Activated CD4-positive, alpha-beta T cell treated with anti-CD3 and anti-CD28 coated beads for 36 hours (primary cell): ENCODE measurements at regions of chr16 and their contacts with region 1.

Region 1: DNA sequence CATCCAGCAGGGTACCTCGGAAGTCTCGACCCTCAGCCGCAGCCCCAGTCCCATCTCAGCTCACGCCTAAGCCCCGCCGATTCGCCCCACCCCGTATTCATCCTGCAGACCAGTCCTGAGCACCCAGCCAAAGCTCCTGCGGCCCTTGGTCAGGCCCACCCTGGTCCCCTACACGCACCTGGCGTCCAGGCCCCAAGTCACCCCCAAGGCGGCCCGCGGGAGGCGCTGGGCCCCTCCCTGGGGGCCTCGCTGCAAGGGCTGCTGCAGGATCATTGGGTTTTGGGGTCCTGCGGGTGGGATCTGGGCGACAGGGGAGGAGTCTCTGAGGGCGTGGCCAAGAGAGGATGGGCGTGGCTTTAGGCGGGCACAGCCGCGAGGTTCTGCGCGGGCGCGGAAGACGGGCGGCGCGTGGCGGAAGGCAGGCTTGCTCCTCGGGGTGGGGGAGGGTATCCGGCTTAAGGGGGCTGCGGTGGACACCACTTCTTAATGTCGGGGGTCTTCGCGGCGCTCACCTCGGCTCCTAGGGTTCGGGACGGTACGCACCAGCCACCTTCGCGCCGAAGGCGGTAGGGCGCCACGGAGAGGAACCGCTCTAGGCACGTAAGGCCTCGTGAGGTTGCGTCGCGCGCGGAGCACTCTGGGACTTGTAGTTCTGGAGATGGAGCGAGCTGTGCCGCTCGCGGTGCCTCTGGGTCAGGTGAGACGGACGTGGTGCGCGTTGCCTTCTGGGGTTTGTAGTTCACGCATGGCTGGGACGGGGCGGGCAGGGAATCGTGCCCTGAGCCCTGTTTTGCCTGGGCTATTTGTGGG is at the starts of genes HCFC1R1 and THOC6:
- DNase-seq: peak; percentile 99
- ATAC-seq: peak; percentile 74
- H3K4me3 Mint-ChIP-seq: peak within 1 kb of the TSS; percentile 74
- H3K27ac Mint-ChIP-seq: peak within 1 kb of the TSS; percentile 97
- H3K4me1 Mint-ChIP-seq: peaks cover 50% of the 10 kb centered on the region
- H3K27me3 Mint-ChIP-seq: peaks cover 4% of the 10 kb centered on the region
- total RNA-seq, gene HCFC1R1: 30.0 to 30.7 TPM
- total RNA-seq, gene THOC6: 46.9 to 50.2 TPM

Region 2: GRCh38 chr16:2673066-2673999 is 350.5 kb before region 1 on chr16:
- CTCF ChIA-PET with region 1: no interaction called
- POLR2A ChIA-PET with region 1: no interaction called
- intact Hi-C with region 1: loop called in 1 of 2 experiments (anchors 1 kb)
- DNase-seq: peak; percentile 98
- ATAC-seq: peak; percentile 97
- H3K4me3 Mint-ChIP-seq: peak overlapping the region; percentile 73
- H3K27ac Mint-ChIP-seq: peak overlapping the region; percentile 47
- H3K4me1 Mint-ChIP-seq: peaks cover 28% of the 10 kb centered on the region
- H3K27me3 Mint-ChIP-seq: no peaks in the 10 kb centered on the region

Region 3: DNA sequence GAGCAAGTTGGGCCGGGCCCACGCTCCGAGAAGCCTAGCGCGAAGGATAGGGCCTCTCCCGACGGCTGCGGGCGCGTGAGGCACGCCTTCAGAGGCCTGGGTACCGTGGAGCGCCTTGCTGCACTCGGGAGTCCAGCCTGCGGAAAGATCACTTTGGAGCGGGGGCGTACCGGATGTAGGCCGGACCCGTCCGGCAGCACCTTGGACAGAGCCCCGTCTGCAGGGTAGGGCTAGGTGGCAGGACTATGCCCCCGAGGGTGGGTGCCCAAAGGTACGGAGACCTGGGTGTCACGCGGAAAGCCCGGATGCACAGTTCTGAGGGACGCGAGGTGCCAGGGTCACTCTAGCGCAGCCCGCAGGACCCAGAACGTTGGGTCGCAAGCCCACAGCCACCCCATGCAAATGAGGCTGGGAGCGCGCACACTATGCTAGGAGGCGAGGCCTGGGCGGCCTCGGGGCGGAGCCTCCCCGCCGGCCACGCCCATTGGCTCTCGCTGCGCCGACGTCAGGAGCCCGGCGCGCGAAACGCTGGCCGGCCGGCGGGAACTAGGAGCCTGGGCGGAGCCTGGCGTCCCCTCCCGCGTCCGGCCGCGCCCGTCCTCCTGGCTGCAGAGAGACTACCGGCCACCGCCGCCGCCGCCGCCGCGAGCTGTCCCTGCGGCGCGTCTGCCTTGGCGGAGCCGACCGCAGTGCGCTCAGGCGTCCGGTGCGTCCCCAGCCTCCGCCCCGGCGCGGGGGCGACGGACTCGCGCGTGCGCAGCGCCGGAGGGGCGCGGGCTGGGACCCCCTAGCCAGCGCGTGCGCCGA is 54.9 kb before region 1 on chr16 and contains the start of gene PAQR4:
- CTCF ChIA-PET with region 1: interaction called, 5 read pairs
- POLR2A ChIA-PET with region 1: no interaction called
- intact Hi-C with region 1: loop called (anchors 1 to 5 kb)
- DNase-seq: peak; percentile 90
- ATAC-seq: peak; percentile 75
- H3K4me3 Mint-ChIP-seq: peak within 1 kb of the TSS; percentile 72
- H3K27ac Mint-ChIP-seq: peak within 1 kb of the TSS; percentile 25
- H3K4me1 Mint-ChIP-seq: peaks cover 31% of the 10 kb centered on the region
- H3K27me3 Mint-ChIP-seq: peaks cover 21% of the 10 kb centered on the region
- total RNA-seq, gene PAQR4: 28.7 to 31.2 TPM

Region 4: DNA sequence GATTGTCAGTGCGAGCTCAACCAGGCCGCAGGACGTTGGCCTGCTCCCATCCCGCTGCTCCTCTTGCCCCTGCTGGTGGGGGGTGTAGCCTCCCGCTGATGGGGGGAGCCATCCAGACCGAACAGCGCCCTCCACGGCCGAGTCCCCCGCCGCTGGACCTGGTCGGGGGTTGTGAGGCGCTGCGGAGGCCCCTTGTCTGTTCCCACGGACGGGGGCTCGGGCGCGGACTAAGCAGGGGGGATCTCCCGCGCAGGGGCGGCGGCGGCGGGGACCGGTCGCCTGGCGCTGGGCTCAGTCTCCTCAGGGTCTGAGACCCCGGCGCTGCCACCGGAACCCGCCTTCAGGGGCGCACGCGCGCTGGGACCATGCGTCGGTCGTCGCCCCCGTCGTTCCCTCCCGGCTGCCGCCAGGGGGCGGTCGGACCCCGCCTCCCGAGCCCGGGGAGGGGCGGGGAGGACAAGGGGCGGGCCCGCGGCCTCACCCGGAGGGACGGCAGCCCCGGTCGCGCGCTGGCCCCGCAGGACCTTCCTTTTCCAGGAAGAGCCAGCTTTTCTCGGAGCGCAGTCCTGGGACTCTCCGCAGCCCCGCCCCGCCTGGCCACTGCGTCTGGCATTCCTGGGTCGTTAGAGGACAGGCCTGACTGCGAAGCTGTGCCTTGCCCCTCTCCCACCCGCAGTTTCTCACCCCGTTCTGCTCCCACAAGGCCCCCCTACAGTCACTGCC is 35.3 kb after region 1 on chr16:
- CTCF ChIA-PET with region 1: interaction called, 30 read pairs
- POLR2A ChIA-PET with region 1: interaction called, 3 read pairs
- intact Hi-C with region 1: loop called (anchors 1 to 5 kb)
- DNase-seq: peak; percentile 93
- ATAC-seq: peak; percentile 83
- H3K4me3 Mint-ChIP-seq: peak overlapping the region; percentile 84
- H3K27ac Mint-ChIP-seq: peak overlapping the region; percentile 93
- H3K4me1 Mint-ChIP-seq: peaks cover 62% of the 10 kb centered on the region
- H3K27me3 Mint-ChIP-seq: no peaks in the 10 kb centered on the region

Region 5: GRCh38 chr16:3129137-3130131 is 105.6 kb after region 1 on chr16:
- CTCF ChIA-PET with region 1: interaction called, 104 read pairs
- POLR2A ChIA-PET with region 1: no interaction called
- intact Hi-C with region 1: loop called in 1 of 2 experiments (anchors 1 kb)
- DNase-seq: peak; percentile 85
- ATAC-seq: peak; percentile 78
- H3K4me3 Mint-ChIP-seq: peak overlapping the region; percentile 84
- H3K27ac Mint-ChIP-seq: peak overlapping the region; percentile 90
- H3K4me1 Mint-ChIP-seq: peaks cover 52% of the 10 kb centered on the region
- H3K27me3 Mint-ChIP-seq: no peaks in the 10 kb centered on the region

Region 6: DNA sequence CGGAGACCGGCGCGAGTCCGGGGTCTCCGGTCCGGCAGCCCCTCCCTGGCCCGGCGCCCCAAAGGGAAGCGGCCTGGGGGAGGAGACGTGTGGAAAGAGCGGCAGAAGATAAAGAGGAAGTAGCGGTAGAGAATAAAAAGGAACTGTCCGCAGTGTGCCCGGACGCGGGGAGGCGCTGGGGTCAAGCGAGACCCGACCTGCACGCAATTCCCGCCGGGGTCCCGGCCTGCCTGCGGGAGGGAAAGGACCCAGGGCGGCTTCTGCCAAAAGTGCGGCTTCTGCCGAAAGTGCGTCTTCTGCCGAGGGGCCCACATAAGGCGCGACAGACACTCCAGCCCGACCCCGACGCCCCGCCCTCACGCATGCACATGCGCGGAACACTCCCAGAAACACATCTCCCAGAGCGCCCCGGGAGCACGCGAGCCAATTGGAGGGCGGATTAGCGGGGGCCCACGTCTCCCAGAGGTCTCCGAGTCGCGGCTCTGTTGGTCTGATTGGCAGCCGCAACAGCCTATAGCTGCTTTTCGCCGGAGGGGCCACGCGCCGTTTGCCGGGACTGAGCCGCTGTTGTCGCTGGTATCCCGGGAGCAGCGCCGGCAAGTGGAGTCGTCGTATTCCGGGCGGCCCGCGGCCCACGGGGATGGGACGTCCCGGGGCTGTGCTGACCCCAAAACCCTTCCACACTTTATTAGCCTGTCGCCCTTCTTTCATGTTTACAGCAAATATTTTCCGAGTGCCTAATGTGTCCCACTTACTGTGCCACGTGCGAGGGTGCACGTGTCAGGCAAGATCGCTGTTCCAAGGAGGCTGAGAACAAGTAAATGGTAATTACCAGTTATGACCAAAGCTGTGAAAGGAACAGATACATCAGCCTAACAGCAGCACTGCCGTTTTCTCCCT is 240.5 kb after region 1 on chr16:
- CTCF ChIA-PET with region 1: no interaction called
- POLR2A ChIA-PET with region 1: no interaction called
- intact Hi-C with region 1: loop called in 1 of 2 experiments (anchors 5 kb)
- DNase-seq: peak; percentile 99
- ATAC-seq: peak; percentile 95
- H3K4me3 Mint-ChIP-seq: peak overlapping the region; percentile 83
- H3K27ac Mint-ChIP-seq: peak overlapping the region; percentile 90
- H3K4me1 Mint-ChIP-seq: peaks cover 25% of the 10 kb centered on the region
- H3K27me3 Mint-ChIP-seq: no peaks in the 10 kb centered on the region